Caco-2 (cell line): ENCODE measurements at regions of chr2 and their contacts with region 1.

Region 1: DNA sequence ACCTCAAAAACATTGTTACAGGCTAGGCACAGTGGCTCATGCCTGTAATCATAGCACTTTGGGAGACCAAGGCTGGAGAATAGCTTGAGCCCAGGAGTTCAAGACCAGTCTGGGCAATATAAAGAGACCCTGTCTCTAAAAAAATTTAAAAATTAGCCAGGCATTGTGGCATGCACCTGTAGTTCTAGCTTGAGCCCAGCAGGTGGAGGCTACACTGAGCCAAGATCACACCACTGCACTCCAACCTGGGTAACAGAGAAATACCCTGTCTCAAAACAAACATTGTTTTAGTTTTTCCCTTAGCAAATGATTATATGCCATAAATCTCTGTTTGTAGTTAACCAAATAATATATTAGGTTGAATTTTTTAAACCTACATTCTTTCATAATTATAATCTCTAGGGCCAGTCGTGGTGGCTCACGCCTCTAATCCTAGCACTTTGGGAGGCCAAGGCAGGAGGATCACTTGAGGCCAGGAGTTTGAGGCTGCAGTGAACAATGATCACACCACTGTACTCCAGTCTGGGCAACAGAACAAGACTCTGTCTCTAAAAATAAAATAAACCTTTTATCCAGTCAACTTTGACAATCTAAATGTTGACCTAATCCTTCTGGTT is 13.3 kb upstream of the CYP20A1 start:
- DNase-seq: peak; percentile 43 to 51
- H3K4me3 ChIP-seq: no peak overlapping the region
- H3K4me3 Mint-ChIP-seq: no peak overlapping the region
- H3K27ac Mint-ChIP-seq: no peak overlapping the region
- H3K4me1 ChIP-seq: no peaks in the 10 kb centered on the region
- H3K4me1 Mint-ChIP-seq: no peaks in the 10 kb centered on the region
- H3K27me3 ChIP-seq: no peaks in the 10 kb centered on the region
- H3K27me3 Mint-ChIP-seq: no peaks in the 10 kb centered on the region
- CTCF ChIP-seq: peak; percentile 76 to 78

Region 2: GRCh38 chr2:203155406-203155805 is 70.1 kb before region 1 on chr2:
- CTCF ChIA-PET with region 1: no interaction called
- POLR2A ChIA-PET with region 1: no interaction called
- intact Hi-C with region 1: no loop called
- DNase-seq: no peak
- H3K4me3 ChIP-seq: no peak overlapping the region
- H3K4me3 Mint-ChIP-seq: no peak overlapping the region
- H3K27ac Mint-ChIP-seq: no peak overlapping the region
- H3K4me1 ChIP-seq: no peaks in the 10 kb centered on the region
- H3K4me1 Mint-ChIP-seq: no peaks in the 10 kb centered on the region
- H3K27me3 ChIP-seq: no peaks in the 10 kb centered on the region
- H3K27me3 Mint-ChIP-seq: no peaks in the 10 kb centered on the region
- CTCF ChIP-seq: no peak

Region 3: DNA sequence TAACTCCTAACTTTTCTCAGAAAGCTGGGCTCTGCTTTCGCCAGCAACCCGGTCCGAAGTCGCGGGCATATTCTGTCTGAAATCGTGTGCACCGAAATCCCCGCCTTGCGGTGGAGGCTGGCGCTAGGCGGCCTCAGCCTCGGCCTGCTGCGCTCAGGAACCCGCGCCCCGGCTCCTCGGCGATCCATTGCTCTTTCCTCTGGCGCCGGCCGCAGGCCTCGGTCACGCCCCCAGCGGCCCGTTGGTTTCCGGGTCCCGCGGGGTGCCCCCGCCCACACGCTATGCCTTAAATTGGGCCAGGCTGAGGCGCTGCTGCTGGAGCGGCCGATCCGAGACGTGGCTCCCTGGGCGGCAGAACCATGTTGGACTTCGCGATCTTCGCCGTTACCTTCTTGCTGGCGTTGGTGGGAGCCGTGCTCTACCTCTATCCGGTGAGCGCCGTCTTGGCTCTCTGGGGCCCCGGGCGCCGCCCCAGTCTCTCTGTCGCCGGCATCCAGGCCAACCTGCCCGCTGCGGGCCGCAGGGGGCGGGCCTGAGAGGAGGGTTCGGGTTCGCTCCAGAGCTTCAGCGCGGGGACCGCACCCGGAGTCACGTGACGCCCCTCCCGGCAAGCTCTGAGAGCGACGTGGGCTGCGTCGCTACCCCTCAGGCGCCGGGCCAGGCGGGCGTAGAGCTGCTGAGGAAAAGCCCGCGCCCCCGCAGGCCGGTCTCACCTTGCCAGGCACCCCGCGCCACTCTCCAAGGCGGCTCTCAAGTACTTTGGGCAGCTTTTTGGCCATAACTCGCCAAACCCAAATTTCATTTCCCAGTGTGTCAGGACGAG is 13.4 kb after region 1 on chr2 and contains the start of gene CYP20A1:
- CTCF ChIA-PET with region 1: interaction called, 4 read pairs
- POLR2A ChIA-PET with region 1: no interaction called
- intact Hi-C with region 1: loop called (anchors 1 kb)
- DNase-seq: peak; percentile 96 to 99
- H3K4me3 ChIP-seq: peak within 1 kb of the TSS; percentile 65
- H3K4me3 Mint-ChIP-seq: peak within 1 kb of the TSS; percentile 97
- H3K27ac Mint-ChIP-seq: peak within 1 kb of the TSS; percentile 97
- H3K4me1 ChIP-seq: peaks cover 11% of the 10 kb centered on the region; the same call in 1 of the 2 replicates
- H3K4me1 Mint-ChIP-seq: peaks cover 15% of the 10 kb centered on the region
- H3K27me3 ChIP-seq: no peaks in the 10 kb centered on the region
- H3K27me3 Mint-ChIP-seq: no peaks in the 10 kb centered on the region
- CTCF ChIP-seq: peak in 1 of 2 experiments; percentile 57
- total RNA-seq, gene CYP20A1: 32.1 and 39.3 TPM in 2 replicates

Region 4: DNA sequence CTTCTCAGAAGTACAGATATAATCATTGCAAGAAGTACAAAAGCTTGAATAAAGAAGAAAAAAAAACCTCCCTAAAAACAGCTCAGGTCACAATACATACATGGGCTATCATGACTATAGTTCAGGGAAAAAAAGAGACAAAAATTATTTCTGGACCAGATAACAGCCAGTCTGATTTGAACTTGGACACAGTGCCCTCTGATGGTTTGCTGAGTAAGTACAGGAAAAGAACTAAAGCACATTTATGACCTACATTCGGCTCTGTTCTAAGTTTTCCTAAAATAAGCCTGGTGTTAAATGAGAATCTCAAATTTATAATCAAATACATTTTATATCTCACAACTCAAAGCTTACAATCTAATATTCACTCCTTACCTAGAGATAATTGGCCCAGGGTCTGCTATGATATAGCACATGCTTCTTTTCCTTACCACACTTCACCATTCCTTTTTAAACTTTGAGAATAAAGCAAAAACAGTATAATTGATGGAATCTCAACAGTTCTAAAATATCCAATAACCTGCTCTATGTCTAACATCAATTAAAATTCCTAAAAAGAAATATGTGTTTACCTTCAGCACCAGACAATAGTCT is 228.4 kb after region 1 on chr2:
- CTCF ChIA-PET with region 1: no interaction called
- POLR2A ChIA-PET with region 1: no interaction called
- intact Hi-C with region 1: loop called (anchors 1 kb)
- DNase-seq: peak in 1 of 2 experiments; percentile 51
- H3K4me3 ChIP-seq: no peak overlapping the region
- H3K4me3 Mint-ChIP-seq: no peak overlapping the region
- H3K27ac Mint-ChIP-seq: no peak overlapping the region
- H3K4me1 ChIP-seq: peaks cover 10% of the 10 kb centered on the region
- H3K4me1 Mint-ChIP-seq: peaks cover 13% of the 10 kb centered on the region
- H3K27me3 ChIP-seq: no peaks in the 10 kb centered on the region
- H3K27me3 Mint-ChIP-seq: no peaks in the 10 kb centered on the region
- CTCF ChIP-seq: peak; percentile 70 to 80